Aorta (tissue), 5 donors: ENCODE measurements at regions of chr3 and their contacts with region 1.

Region 1: DNA sequence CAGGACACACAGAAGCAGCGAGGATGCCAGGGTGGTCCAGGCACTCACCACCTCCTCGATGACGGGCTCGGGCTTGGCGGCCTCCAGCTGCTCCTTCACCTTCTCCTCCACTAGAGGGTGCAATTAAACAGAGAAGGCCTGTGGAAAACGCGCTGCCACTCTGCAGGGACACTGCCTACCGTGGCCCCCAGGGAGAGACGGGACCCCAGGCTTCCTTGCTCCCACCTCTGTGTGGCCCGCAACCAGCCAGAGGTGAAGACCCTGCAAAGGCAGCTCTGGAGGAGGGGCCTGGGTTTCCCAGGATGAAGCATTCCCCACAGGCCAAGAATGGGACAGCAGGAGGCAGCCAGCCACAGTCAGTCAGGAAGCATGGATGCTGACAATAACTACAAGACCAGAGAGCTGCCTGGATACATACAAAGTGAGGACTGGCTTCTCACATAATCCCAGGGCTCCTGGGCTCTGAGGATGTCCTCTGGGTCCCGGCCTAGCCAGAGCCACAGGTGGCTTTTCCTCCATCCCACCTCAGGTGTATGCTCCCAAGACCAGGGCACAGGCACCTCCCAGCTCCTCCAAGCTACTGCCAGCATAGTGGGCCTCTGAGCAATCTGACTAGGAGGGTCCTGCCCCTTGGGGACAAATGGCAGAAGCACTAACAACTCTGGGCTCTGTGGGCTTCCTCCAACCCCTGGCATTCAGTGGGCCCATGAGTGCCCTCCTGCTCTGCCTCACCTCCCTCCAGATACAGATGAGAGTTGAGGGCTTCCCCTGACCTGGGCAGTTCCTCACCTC is 46.2 kb downstream of the PTH1R start:
- DNase-seq: peak; percentile 54 to 74
- ATAC-seq: no peak
- H3K4me3 ChIP-seq: no peak overlapping the region
- H3K27ac ChIP-seq: no peak overlapping the region
- H3K4me1 ChIP-seq: no peaks in the 10 kb centered on the region
- H3K27me3 ChIP-seq: no peaks in the 10 kb centered on the region

Region 2: GRCh38 chr3:46998121-46998851 is 74.5 kb after region 1 on chr3:
- intact Hi-C with region 1: loop called (anchors 2 kb)
- DNase-seq: peak; percentile 80 to 89
- ATAC-seq: no peak
- H3K4me3 ChIP-seq: no peak overlapping the region
- H3K27ac ChIP-seq: no peak overlapping the region
- H3K4me1 ChIP-seq: no peaks in the 10 kb centered on the region
- H3K27me3 ChIP-seq: no peaks in the 10 kb centered on the region

Region 3: DNA sequence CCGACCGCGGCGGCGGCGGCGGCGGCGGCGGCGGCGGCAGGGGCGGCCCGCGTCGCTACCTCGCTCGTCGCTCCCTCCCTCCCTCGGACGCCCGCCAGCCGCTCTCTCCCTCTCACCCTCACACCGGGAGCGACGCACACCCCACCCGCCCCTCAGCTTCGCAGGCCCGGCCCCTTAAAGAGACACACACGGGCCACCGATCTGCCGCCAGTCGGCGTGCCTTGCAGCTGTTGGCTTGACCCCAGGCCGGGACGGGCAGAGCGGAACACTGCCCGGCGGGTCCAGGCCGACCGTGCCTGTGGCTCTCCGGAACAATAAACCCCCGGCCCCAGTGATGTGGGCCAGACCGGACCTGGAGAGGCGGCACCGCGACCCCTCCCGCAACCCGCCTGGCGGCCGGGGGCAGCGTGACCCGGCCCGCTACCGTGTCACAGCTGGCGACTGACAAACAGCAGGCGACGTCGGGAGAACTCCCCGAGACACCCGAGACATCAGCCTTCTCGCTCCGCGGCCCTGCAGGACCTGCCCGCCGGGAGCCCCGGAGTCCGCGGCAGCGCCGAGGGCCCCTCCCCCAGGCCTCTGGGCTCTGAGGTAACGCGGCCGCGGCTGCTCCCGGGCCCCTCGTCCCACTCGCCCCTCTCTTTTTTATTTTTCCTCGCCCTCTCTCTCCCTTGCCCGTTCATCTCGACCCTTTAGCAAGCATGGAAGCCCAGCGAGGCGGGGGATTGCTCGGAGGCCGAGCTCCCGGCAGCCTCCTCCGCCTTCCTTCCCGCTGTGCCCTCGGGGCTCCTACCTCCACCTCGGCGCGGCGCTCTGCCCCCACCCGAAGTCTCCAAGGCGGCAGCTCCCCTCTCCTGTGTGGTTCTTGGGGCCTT is 240.5 kb after region 1 on chr3 and contains the start of gene SETD2:
- intact Hi-C with region 1: no loop called
- DNase-seq: peak; percentile 96 to 98
- ATAC-seq: peak; percentile 97
- H3K4me3 ChIP-seq: peak within 1 kb of the TSS; percentile 94 to 97
- H3K27ac ChIP-seq: peak within 1 kb of the TSS; percentile 85 to 87
- H3K4me1 ChIP-seq: peaks cover 0 to 15% of the 10 kb centered on the region in 2 donors
- H3K27me3 ChIP-seq: no peaks in the 10 kb centered on the region
- total RNA-seq, gene SETD2: 51.8 to 62.5 TPM

Region 4: GRCh38 chr3:47186285-47186684 is 262.5 kb after region 1 on chr3:
- intact Hi-C with region 1: no loop called
- DNase-seq: no peak
- ATAC-seq: no peak
- H3K4me3 ChIP-seq: no peak overlapping the region
- H3K27ac ChIP-seq: no peak overlapping the region
- H3K4me1 ChIP-seq: no peaks in the 10 kb centered on the region
- H3K27me3 ChIP-seq: no peaks in the 10 kb centered on the region

Region 5: DNA sequence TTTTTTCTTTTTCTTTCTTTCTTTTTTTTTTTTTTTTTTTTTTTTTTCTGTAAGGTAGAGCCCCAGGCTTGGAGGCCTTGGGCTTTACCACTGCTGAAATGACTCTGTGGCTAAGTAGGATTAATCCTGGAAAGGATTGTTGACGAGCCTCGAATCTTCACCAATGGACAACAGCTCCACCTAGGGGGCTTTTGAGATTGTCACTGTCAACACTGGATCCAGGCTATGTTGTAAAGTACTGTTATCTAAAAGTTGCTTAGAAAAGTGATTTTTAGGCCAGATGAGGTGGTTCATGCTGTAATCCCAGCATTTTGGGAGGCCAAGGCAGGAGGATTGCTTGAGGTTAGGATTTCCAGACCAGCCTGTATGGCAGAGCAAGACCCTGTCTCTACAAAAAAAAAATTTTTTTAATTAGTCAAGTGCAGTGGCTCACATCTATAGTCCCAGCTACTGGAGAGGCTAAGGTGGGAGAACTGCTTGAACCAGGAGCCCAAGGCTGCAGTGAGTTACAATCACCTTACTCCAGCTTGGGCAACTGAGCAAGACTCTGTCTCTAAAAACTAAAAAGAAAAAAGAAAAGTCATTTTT is 400.6 kb after region 1 on chr3:
- intact Hi-C with region 1: loop called in 1 of 2 experiments (anchors 10 kb)
- DNase-seq: peak in 1 of 2 donors; percentile 51
- ATAC-seq: peak; percentile 91
- H3K4me3 ChIP-seq: no peak overlapping the region
- H3K27ac ChIP-seq: no peak overlapping the region
- H3K4me1 ChIP-seq: no peaks in the 10 kb centered on the region
- H3K27me3 ChIP-seq: no peaks in the 10 kb centered on the region